Esophagus muscularis mucosa (tissue), 4 donors: ENCODE measurements at regions of chr3 and their contacts with region 1.

Region 1: GRCh38 chr3:195259475-195260279 is 11.3 kb downstream of the XXYLT1 start:
- DNase-seq: peak; percentile 98
- H3K4me3 ChIP-seq: peak overlapping the region; percentile 73 to 91 (median 75)
- H3K27ac ChIP-seq: peak overlapping the region; percentile 91 to 96 (median 96)
- H3K4me1 ChIP-seq: peaks cover 32 to 39% (median 35%) of the 10 kb centered on the region in 4 donors
- H3K27me3 ChIP-seq: no peaks in the 10 kb centered on the region
- CTCF ChIP-seq: peak; percentile 77 to 99 (median 94)
- EP300 ChIP-seq: no peak
- POLR2A ChIP-seq: no peak

Region 2: GRCh38 chr3:193499119-193499770 is 1760.4 kb before region 1 on chr3:
- intact Hi-C with region 1: no loop called
- DNase-seq: no peak
- H3K4me3 ChIP-seq: no peak overlapping the region
- H3K27ac ChIP-seq: no peak overlapping the region
- H3K4me1 ChIP-seq: no peaks in the 10 kb centered on the region
- H3K27me3 ChIP-seq: no peaks in the 10 kb centered on the region
- CTCF ChIP-seq: no peak
- EP300 ChIP-seq: no peak
- POLR2A ChIP-seq: no peak

Region 3: DNA sequence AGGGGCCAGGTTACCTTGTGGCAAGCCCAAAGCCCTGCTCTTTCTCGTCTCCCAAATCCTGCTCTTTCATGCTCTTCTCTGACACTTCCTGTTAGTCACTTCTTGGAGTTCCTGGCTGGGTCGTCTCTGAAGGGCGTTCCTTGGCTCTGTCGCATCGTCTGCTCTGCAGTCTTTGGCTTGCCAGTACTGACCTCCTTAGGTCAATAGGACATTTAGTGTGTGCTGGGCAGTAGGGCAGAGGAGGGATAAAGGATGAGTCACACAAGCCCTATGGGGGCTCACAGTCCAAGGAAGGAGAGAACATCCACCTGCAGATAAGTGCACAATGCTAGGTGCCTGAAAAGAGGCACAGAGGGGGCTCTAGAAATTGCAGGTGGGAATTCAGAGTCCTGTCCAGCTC is 486.5 kb before region 1 on chr3:
- intact Hi-C with region 1: loop called (anchors 10 kb)
- DNase-seq: no peak
- H3K4me3 ChIP-seq: no peak overlapping the region
- H3K27ac ChIP-seq: peak overlapping the region; percentile 38 to 71 (median 50)
- H3K4me1 ChIP-seq: peaks cover 25 to 44% (median 39%) of the 10 kb centered on the region in 4 donors
- H3K27me3 ChIP-seq: no peaks in the 10 kb centered on the region
- CTCF ChIP-seq: no peak
- EP300 ChIP-seq: no peak
- POLR2A ChIP-seq: no peak

Region 4: GRCh38 chr3:195106418-195106906 is 153.2 kb before region 1 on chr3:
- intact Hi-C with region 1: loop called (anchors 5 kb)
- DNase-seq: peak; percentile 93
- H3K4me3 ChIP-seq: peak overlapping the region; percentile 25 to 46 (median 30)
- H3K27ac ChIP-seq: no peak overlapping the region
- H3K4me1 ChIP-seq: peaks cover 16 to 24% (median 22%) of the 10 kb centered on the region in 4 donors
- H3K27me3 ChIP-seq: no peaks in the 10 kb centered on the region
- CTCF ChIP-seq: peak in 2 of 3 experiments; percentile 99 to 100
- EP300 ChIP-seq: no peak
- POLR2A ChIP-seq: no peak